ENCODE measurements at regions of chr3 and their contacts with region 1.

Region 1: GRCh38 chr3:107574650-107575049 is 51.9 kb downstream of the BBX start:
- DNase-seq: no peak
- ATAC-seq: peak; percentile 62 to 65

Region 2: GRCh38 chr3:107450254-107450893 is 124.3 kb before region 1 on chr3:
- intact Hi-C with region 1: no loop called
- DNase-seq: no peak
- ATAC-seq: no peak

Region 3: GRCh38 chr3:107612664-107613084 is 38.0 kb after region 1 on chr3:
- intact Hi-C with region 1: no loop called
- DNase-seq: no peak
- ATAC-seq: no peak

Region 4: DNA sequence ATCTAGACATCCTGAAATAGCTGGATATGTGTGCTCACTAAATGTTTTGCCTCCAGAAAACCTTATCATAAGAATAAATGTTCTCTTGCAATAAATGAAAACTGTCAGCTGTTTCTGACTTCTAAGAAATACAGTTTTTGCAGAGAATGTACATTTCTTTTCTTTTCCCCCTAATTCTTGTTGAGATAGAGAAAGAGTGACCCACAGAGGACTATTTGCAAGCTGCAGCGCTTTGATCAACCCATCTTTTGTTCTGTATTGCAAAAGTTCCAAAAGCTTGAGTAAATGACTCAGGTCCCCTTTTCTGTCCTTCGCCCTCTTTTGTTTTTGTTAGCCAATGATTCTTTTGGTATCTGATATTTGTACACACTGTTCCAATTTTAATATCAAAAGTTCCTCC is 90.0 kb after region 1 on chr3:
- intact Hi-C with region 1: loop called in 1 of 2 experiments (anchors 5 kb)
- DNase-seq: no peak
- ATAC-seq: no peak

Region 5: GRCh38 chr3:107740992-107741896 is 166.6 kb after region 1 on chr3:
- intact Hi-C with region 1: loop called in 1 of 2 experiments (anchors 10 kb)
- DNase-seq: no peak
- ATAC-seq: no peak

Region 6: GRCh38 chr3:107927361-107928083 is 352.9 kb after region 1 on chr3:
- intact Hi-C with region 1: loop called in 1 of 2 experiments (anchors 5 kb)
- DNase-seq: peak; percentile 76
- ATAC-seq: peak; percentile 98